Activated CD4-positive, alpha-beta memory T cell treated with anti-CD3 and anti-CD28 coated beads, Interleukin-2, amount 10 ng/mL, durations not matched to agents 7 days and 5 days (primary cell): ENCODE measurements at regions of chr1 and their contacts with region 1.

Region 1: DNA sequence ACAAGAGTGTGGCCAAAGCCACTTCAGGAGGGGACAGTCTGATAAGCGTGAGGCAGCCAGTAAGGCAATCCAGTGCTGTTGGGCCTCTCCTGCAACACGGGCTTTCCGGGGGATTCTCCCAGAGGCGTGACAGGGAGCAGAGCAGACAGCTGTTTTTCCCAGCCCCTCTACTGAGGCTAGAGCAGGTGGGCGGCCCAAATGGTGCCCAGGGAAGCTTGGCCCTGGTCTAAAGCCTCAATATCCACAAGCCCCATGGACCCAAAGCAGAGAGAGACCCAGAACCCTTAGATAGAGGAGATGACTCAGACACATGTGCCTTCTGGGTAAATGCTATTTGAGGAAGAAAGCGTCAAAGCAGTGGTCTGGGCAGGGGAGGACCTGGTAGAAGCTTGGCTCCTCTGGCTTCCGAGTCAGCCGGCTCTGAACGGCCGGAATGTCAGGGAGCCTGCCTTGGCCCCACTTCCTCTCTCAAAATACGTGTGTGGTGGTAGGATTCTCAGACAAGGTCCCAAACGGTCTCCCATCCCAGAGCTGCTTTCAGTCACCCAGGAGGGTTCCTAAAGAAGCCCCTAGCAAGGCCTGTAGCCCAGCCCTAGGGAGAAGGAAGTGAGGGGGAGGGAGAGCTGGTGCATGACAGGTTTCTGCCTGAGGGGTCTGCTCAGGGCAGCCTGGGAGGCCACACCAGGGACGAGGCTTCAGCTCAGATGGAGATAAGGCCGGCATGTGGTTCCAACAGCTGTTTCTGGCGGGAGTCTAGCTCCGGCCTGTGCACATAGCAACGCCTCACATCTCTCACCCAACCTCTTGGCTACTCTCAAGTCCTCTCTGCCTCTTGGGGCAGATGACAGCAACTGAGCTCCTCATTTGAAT is 28.8 kb downstream of the PIK3C2B start:
- DNase-seq: no peak
- H3K4me3 Mint-ChIP-seq: no peak overlapping the region
- H3K27ac Mint-ChIP-seq: peak overlapping the region; percentile 16
- H3K4me1 Mint-ChIP-seq: peaks cover 50% of the 10 kb centered on the region
- H3K27me3 Mint-ChIP-seq: no peaks in the 10 kb centered on the region

Region 2: DNA sequence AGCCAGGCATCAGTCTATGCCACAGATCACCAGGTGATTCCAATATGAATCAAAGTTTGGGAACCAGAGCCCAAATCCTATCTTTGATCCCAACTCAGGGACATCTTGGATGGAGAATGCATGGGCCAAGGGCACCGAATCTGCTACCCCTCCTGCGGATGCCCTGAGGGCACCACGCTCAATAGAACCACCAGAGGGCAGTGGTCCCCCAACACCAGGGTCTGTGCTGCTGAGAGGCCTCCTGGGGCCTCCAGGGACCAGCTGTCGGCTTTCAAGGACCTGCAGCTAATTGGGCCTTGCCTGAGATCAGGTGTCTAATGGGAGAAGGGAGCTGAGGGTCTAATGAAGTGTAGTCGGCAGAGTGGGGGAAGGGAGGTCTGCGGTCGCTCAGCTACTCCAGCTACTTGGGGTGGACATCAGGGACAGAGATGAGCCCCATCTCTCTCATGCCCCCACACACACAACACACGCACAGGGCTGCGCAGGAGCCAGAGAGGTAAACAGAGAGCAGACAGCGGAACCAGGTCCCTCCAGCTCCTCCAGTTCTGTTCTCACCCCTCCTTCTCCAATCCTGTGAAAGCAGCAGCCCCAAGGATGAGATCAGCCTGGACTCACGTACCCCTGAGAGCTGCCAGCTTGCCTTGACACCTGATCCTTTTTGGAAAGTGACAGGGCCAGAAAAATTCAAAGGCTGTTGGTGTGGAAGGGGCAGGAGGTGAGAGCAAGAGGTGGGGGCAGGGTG is 19.2 kb before region 1 on chr1:
- CTCF ChIA-PET with region 1: interaction called, 12 read pairs
- POLR2A ChIA-PET with region 1: no interaction called
- DNase-seq: peak; percentile 79
- H3K4me3 Mint-ChIP-seq: no peak overlapping the region
- H3K27ac Mint-ChIP-seq: peak overlapping the region; percentile 57
- H3K4me1 Mint-ChIP-seq: peaks cover 61% of the 10 kb centered on the region
- H3K27me3 Mint-ChIP-seq: no peaks in the 10 kb centered on the region

Region 3: GRCh38 chr1:204600968-204601367 is 135.2 kb after region 1 on chr1:
- CTCF ChIA-PET with region 1: no interaction called
- POLR2A ChIA-PET with region 1: no interaction called
- DNase-seq: no peak
- H3K4me3 Mint-ChIP-seq: no peak overlapping the region
- H3K27ac Mint-ChIP-seq: no peak overlapping the region
- H3K4me1 Mint-ChIP-seq: no peaks in the 10 kb centered on the region
- H3K27me3 Mint-ChIP-seq: no peaks in the 10 kb centered on the region